ENCODE measurements at regions of chr20 and their contacts with region 1.

Region 1: DNA sequence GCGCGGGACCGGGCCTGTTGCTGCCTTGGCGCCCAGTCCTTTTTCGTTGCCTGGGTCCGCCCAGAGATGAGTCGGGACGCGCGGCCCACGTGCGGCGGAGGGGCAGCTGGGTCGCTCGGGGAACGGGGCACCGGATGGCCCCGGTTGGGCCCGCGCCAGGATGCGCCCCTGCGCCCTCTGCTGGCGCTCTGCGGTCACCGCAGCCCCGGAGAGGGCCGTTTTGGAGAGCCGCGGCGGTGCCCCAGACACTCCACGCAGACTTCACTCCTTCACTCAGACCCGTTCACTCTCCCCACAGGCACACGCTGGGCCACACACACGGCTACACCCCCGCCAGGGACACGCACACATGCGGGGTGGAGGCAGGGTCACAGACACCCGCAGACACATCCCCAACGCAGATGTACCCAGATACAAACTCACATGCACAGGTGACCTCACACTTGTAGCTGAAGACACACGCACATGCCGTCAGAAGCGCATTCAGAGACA is 38.8 kb downstream of the SRC start:
- DNase-seq: peak; percentile 56 to 86 (median 72)
- ATAC-seq: peak in 3 of 4 donors; percentile 80 to 88 (median 83)
- H3K4me3 ChIP-seq: peak overlapping the region; percentile 38 to 64 (median 56)
- H3K27ac ChIP-seq: peak overlapping the region in 6 of 12 donors; percentile 27 to 51 (median 42)
- H3K4me1 ChIP-seq: peaks cover 0 to 22% (median 3%) of the 10 kb centered on the region in 12 donors
- H3K27me3 ChIP-seq: no peaks in the 10 kb centered on the region
- CTCF ChIP-seq: peak; percentile 82 to 95 (median 90)
- POLR2A ChIP-seq: no peak

Region 2: GRCh38 chr20:37192137-37192854 is 192.4 kb before region 1 on chr20:
- intact Hi-C with region 1: loop called in 6 of 10 experiments (anchors 10 kb)
- DNase-seq: peak; percentile 84 to 94 (median 89)
- ATAC-seq: peak; percentile 42 to 91 (median 90)
- H3K4me3 ChIP-seq: no peak overlapping the region
- H3K27ac ChIP-seq: no peak overlapping the region
- H3K4me1 ChIP-seq: peaks cover 0 to 54% (median 28%) of the 10 kb centered on the region in 12 donors
- H3K27me3 ChIP-seq: no peaks in the 10 kb centered on the region
- CTCF ChIP-seq: peak; percentile 81 to 98 (median 92)
- POLR2A ChIP-seq: no peak

Region 3: GRCh38 chr20:37265152-37265551 is 119.6 kb before region 1 on chr20:
- intact Hi-C with region 1: loop called in 9 of 10 experiments (anchors 2 to 5 kb)
- DNase-seq: no peak
- ATAC-seq: no peak
- H3K4me3 ChIP-seq: no peak overlapping the region
- H3K27ac ChIP-seq: no peak overlapping the region
- H3K4me1 ChIP-seq: peaks cover 0 to 4% (median 0%) of the 10 kb centered on the region in 12 donors
- H3K27me3 ChIP-seq: peaks cover 0 to 23% (median 3%) of the 10 kb centered on the region in 9 donors
- CTCF ChIP-seq: no peak
- POLR2A ChIP-seq: no peak

Region 4: DNA sequence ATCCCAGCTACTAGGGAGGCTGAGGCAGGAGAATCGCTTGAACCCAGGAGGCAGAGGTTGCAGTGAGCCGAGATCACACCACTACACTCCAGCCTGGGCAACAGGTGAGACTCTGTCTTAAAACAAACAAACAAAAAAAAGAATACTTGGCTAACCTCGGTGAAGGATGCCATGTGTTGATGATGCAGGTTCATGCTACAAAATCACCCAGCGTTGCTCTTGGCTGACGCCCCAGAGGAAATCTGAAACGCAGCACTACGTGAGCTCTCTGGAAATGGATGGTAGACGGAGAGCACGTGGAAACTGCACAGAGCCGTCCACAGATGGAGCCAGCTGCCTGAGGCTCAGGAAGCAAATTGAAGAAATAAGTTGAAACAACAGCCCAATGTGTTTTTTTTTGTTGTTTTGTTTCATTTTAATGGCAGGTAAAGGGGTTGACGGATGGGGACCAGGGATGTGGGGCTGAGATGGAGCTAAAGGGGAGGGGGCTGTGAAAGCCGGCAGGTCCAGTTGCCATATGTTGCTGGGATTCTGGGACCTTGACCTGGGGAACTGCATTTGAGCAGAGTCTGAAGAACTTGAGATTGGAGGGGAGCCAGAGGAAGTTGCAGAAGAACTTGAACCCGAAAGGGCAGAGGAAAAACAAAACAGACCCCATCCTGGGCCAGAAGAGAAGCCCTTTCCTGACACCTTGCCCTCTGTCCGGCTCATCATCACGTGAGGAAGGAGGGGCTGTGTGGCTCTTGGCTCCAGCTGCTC is 108.1 kb before region 1 on chr20:
- intact Hi-C with region 1: loop called in 7 of 10 experiments (anchors 2 to 5 kb)
- DNase-seq: peak in 4 of 5 donors; percentile 39 to 61 (median 56)
- ATAC-seq: peak; percentile 77 to 95 (median 90)
- H3K4me3 ChIP-seq: peak overlapping the region in 3 of 12 donors; percentile 9 to 26 (median 10)
- H3K27ac ChIP-seq: peak overlapping the region in 3 of 12 donors; percentile 14 to 76 (median 57)
- H3K4me1 ChIP-seq: peaks cover 0 to 37% (median 9%) of the 10 kb centered on the region in 12 donors
- H3K27me3 ChIP-seq: peaks cover 0 to 5% (median 0%) of the 10 kb centered on the region in 9 donors
- CTCF ChIP-seq: peak in 9 of 12 donors; percentile 20 to 55 (median 33)
- POLR2A ChIP-seq: no peak

Region 5: DNA sequence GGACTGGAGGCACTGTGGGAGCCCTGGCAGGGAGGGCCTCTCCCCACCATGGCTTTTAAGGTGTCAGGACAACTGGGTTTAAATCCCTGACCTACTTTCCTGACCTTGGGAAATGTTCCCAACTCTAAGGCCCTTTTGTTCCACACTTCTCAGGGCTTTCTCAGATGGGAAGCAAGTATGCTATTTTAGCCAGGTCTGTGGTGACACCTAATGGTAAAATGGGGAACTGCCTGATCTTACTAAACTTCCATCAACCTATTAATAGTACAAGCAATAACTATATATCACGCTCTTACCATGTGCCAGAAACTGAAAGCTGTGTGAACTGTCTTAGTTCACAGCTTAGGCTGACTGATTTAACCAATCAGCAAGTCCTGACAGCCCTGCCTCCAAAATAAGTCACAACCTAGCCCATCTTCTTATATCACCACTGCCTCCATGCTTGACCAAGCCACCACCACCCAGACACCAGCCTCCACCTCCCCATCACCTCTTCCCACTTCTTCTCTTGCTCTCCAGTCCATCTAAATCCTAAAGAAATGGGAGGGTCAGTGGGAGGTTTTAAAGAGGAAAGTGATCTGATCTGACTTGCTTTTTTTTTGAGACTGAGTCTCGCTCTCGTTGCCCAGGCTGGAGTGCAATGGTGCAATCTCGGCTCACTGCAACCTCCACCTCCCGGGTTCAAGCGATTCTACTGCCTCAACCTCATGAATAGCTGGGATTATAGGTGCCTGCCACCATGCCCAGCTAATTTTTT is 149.8 kb after region 1 on chr20:
- intact Hi-C with region 1: loop called in 9 of 10 experiments (anchors 2 to 10 kb)
- DNase-seq: peak in 2 of 5 donors; percentile 43 to 49
- ATAC-seq: peak; percentile 78 to 91 (median 87)
- H3K4me3 ChIP-seq: no peak overlapping the region
- H3K27ac ChIP-seq: peak overlapping the region in 1 of 12 donors; percentile 31
- H3K4me1 ChIP-seq: peaks cover 0 to 7% (median 0%) of the 10 kb centered on the region in 12 donors
- H3K27me3 ChIP-seq: no peaks in the 10 kb centered on the region
- CTCF ChIP-seq: peak; percentile 72 to 93 (median 88)
- POLR2A ChIP-seq: no peak

Measured in heart left ventricle (tissue), 16 donors.